ENCODE measurements at regions of chr14 and their contacts with region 1.

Region 1: DNA sequence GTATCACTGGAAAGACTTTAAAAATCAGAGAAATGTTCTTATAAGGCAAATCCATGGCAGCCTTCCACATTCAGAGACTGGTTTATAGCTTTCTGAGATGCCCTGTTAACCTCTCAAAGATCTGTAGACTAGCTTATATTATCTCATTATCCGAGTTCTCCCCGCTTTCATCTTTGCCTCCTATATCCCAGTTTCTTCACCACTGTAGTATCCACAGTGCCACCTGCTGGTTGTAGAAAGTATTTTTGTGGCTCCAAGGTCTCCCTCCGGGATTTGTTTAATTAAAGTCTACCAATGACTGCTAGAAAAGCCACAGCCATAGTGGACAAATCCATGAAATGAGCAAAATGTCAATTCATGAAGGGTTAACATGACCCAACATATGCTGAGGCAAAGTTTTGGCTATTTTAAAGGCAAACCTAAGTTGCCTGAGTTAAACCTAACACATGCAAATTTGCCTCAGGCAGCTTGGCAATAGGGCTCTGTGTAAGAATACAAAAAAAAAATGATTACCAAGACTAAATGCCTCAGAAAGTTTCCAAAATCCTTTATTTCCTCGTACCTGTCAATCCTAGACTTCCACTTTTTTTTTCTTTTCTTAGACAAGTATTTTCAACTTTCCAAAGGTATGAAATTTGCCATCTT is 218.8 kb upstream of the BMP4 start:
- DNase-seq: peak; percentile 20
- ATAC-seq: peak; percentile 69; the same call in 1 of the 2 replicates
- H3K4me3 ChIP-seq: no peak overlapping the region
- H3K27ac ChIP-seq: no peak overlapping the region
- H3K4me1 ChIP-seq: no peaks in the 10 kb centered on the region
- H3K27me3 ChIP-seq: no peaks in the 10 kb centered on the region
- CTCF ChIP-seq: peak; percentile 76

Region 2: DNA sequence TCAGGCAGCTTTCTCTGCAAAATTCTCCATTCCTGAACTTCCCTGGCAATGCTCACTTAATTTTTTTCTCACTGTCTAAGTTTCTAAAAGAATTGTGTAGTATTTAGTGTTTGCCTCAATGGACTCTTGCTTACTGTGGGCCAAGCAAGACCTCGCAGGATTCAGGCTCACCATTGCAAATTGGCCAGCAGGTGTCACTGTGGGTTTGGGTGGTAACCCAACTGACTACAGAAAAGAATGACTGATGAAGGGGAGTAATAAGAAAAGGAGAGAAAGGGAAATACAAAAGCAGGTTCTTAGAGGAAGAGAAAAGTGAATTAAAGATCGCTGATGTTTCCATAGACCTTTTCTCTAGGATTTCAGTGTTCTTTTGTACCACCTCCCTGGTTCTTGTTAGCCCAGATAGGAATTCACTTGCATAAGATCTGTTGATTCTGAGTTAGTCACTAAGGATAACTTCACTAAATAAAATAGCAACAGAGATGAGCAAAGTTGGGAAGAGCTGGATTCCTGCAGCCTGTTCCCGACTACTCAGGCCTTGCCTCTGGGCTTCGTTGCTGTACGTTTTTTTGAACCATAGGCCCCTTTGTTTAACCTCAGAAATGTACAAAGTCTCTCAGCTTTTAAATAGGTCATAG is 635.8 kb before region 1 on chr14:
- CTCF ChIA-PET with region 1: no interaction called
- POLR2A ChIA-PET with region 1: no interaction called
- in situ Hi-C with region 1: no loop called
- intact Hi-C with region 1: loop called (anchors 5 kb)
- DNase-seq: peak; percentile 53
- ATAC-seq: peak; percentile 82
- H3K4me3 ChIP-seq: no peak overlapping the region
- H3K27ac ChIP-seq: no peak overlapping the region
- H3K4me1 ChIP-seq: no peaks in the 10 kb centered on the region
- H3K27me3 ChIP-seq: no peaks in the 10 kb centered on the region
- CTCF ChIP-seq: peak; percentile 78

Region 3: DNA sequence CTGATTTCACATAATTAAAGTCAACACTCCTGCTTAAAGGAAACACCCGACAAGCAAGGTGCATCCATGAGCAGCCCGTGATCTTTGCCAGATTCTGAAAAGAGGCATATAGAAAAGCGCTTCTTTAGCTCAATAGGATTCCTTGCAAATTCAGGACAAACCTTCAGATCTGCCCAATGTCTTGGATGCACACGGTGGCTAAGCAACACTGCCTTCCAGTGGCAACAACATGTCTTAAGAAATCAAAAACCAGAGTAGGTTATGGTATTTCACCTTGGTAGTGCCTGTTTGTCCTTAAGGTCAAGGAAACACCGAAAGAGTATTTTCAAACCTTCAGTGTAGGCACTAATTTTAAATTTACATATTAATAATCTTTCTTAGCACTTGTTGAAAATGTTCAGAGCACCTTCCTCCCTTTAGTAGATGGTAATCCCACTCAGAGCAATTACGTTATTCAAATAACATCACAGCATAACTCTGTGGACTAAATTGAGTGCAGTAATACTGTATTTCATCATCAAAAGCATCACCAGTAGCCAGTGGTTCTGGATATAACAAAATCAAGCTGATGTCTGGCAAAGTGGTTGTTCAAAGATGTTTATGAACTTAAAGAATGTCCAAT is 163.4 kb after region 1 on chr14:
- CTCF ChIA-PET with region 1: no interaction called
- POLR2A ChIA-PET with region 1: no interaction called
- in situ Hi-C with region 1: no loop called
- intact Hi-C with region 1: loop called (anchors 10 kb)
- DNase-seq: no peak
- ATAC-seq: no peak
- H3K4me3 ChIP-seq: no peak overlapping the region
- H3K27ac ChIP-seq: no peak overlapping the region
- H3K4me1 ChIP-seq: no peaks in the 10 kb centered on the region
- H3K27me3 ChIP-seq: peaks cover 4% of the 10 kb centered on the region; the same call in 1 of the 2 replicates
- CTCF ChIP-seq: peak; percentile 59

Measured in Panc1 (cell line).